Heart left ventricle (tissue), 16 donors: ENCODE measurements at regions of chr6 and their contacts with region 1.

Region 1: DNA sequence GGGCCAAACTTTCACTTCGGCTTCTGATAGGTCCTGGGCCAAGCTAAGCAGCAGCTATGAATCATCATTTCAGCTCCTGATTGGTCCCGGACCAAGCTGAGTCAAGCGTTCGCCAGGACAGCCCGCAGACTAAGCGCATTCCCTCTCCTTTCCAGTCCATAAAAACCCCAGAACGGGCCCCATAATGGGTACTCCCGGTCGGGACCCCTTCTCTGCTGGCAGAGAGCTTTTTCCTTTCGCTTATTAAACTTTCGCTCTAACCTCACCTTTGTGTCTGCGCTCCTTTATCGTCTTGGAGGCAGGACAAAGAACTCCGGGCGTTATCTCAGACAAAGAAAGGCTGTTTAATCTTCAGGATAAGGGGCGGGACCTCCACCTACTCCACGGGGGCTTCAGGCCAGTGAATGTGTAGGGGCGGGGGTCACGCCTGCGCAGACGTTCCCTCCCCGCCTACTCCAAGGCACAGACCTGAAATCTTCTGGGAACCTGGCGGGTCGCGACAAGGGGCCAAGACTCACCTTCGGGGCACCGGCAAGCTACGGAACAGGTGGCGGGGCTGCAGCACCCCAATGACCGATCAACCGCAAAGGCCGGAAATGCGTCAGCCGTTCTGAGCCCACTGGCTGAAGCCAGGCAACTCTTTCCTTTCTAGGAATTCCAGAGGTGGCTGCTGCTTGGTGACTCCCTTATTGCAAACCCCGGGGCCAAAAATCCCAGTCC is at the start of gene ZSCAN31:
- DNase-seq: peak; percentile 93 to 98 (median 96)
- ATAC-seq: peak; percentile 96 to 98 (median 97)
- H3K4me3 ChIP-seq: peak within 1 kb of the TSS; percentile 57 to 85 (median 74)
- H3K27ac ChIP-seq: peak within 1 kb of the TSS; percentile 90 to 100 (median 97)
- H3K4me1 ChIP-seq: peaks cover 0 to 24% (median 12%) of the 10 kb centered on the region in 12 donors
- H3K27me3 ChIP-seq: no peaks in the 10 kb centered on the region
- CTCF ChIP-seq: no peak
- POLR2A ChIP-seq: peak; percentile 49 to 83
- total RNA-seq, gene ZSCAN31: 7.5 to 22.0 (median 10.7) TPM

Region 2: DNA sequence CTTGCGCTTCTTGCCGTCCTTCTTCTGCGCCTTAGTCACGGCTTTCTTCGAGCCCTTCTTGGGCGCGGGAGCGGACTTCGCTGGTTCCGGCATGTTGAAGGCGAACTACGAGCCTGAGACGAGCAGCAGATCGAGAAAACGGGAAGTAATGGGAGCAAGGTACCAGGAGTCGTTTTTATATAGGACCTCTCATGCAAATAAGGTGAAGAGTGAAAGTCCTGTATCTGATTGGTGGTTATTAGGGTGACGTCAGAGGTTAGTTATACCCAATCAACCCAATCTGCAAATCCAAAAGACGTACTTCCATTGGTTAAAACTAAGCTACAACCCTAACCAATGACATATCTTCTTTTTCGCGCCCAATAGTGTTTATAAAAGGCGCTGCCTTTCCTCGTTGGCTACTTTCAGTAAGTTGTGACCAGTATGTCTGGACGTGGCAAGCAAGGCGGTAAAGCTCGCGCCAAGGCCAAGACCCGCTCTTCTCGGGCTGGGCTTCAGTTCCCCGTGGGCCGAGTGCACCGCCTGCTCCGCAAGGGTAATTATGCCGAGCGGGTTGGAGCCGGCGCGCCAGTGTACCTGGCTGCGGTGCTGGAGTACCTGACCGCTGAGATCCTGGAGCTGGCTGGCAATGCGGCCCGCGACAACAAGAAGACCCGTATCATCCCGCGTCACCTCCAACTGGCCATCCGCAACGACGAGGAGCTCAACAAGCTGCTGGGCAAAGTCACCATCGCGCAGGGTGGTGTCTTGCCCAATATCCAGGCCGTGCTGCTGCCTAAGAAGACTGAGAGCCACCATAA is 1188.8 kb before region 1 on chr6:
- intact Hi-C with region 1: loop called in 1 of 10 experiments (anchors 5 kb)
- DNase-seq: peak; percentile 73 to 84 (median 79)
- ATAC-seq: peak; percentile 95 to 98 (median 96)
- H3K4me3 ChIP-seq: peak overlapping the region; percentile 30 to 79 (median 65)
- H3K27ac ChIP-seq: peak overlapping the region; percentile 77 to 98 (median 90)
- H3K4me1 ChIP-seq: peaks cover 0 to 37% (median 11%) of the 10 kb centered on the region in 12 donors
- H3K27me3 ChIP-seq: no peaks in the 10 kb centered on the region
- CTCF ChIP-seq: no peak
- POLR2A ChIP-seq: peak; percentile 15 to 96

Region 3: DNA sequence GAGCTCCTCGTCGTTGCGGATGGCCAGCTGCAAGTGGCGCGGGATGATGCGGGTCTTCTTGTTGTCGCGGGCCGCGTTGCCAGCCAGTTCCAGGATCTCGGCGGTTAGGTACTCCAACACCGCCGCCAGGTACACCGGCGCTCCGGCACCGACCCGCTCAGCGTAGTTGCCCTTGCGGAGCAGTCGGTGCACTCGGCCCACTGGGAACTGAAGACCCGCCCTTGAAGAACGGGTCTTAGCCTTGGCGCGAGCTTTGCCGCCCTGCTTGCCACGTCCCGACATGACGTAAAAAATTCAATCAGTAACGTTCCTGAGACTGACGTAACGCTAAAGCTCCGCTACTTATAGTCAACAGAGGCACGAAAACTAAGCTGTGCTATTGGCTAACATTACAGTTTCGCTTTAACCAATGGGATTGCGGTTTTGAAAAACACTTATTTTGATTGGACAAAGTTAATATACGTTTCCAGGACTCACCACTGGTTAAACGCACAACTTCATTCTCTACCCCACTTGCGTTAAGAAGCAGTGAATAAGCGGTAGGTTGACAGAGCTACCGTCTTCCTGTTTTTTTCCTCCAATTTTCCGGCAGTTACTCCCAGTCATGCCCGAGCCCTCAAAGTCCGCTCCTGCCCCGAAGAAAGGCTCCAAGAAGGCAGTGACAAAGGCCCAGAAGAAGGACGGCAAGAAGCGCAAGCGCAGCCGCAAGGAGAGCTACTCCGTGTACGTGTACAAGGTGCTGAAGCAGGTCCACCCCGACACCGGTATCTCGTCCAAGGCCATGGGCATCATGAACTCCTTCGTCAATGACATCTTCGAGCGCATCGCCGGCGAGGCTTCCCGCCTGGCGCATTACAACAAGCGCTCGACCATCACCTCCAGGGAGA is 497.4 kb before region 1 on chr6:
- intact Hi-C with region 1: loop called in 1 of 10 experiments (anchors 10 kb)
- DNase-seq: peak; percentile 74 to 85 (median 76)
- ATAC-seq: peak; percentile 93 to 95 (median 95)
- H3K4me3 ChIP-seq: peak overlapping the region; percentile 62 to 87 (median 76)
- H3K27ac ChIP-seq: peak overlapping the region; percentile 88 to 98 (median 95)
- H3K4me1 ChIP-seq: peaks cover 0 to 33% (median 20%) of the 10 kb centered on the region in 12 donors
- H3K27me3 ChIP-seq: no peaks in the 10 kb centered on the region
- CTCF ChIP-seq: peak in 1 of 12 donors; percentile 11
- POLR2A ChIP-seq: peak; percentile 4 to 90

Region 4: DNA sequence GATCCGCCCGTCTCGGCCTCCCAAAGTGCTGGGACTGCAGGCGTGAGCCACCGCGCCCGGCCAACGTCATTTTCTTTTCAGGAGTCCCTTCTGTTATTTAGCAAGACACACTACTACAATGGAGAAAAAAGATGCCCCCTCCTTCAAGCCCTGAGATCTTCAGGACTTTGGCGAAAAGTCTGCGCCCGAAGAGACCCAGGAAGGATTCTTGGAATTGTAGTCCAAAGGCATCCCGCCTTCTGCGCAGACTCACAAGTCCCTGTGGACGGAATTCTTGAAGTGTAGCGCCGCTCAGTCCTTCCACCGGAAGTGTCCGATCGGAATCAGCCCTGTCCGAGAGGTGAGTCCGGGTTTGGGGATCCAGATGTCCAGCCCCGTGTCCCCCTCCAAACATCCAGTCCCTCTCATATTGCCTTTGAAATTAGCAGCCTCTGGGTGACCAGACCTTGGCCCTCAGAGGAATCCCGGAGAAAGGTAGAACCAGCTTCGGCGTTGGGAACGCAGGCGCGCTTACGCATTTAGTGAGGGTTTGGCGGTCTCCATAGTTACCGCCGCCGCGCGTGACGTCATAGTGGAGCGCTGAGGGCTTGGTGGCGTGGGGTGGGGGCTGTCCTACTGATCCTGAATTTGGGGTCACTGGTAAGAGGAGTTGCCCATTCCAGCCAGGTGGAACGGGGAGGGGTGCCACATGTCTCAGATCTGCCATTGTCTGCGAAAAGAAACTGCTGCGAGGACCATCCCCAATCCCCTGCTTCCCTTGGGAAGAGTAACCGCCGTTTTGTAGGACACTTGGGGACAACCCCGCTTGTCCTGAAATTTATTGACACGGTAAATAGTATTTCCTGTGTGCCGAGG is 254.9 kb before region 1 on chr6:
- intact Hi-C with region 1: loop called in 1 of 10 experiments (anchors 10 kb)
- DNase-seq: peak; percentile 94 to 97 (median 95)
- ATAC-seq: peak; percentile 97 to 99 (median 99)
- H3K4me3 ChIP-seq: peak overlapping the region; percentile 56 to 94 (median 77)
- H3K27ac ChIP-seq: peak overlapping the region; percentile 59 to 91 (median 86)
- H3K4me1 ChIP-seq: peaks cover 0 to 16% (median 6%) of the 10 kb centered on the region in 12 donors
- H3K27me3 ChIP-seq: no peaks in the 10 kb centered on the region
- CTCF ChIP-seq: peak in 1 of 12 donors; percentile 6
- POLR2A ChIP-seq: peak in 1 of 2 donors; percentile 48

Region 5: DNA sequence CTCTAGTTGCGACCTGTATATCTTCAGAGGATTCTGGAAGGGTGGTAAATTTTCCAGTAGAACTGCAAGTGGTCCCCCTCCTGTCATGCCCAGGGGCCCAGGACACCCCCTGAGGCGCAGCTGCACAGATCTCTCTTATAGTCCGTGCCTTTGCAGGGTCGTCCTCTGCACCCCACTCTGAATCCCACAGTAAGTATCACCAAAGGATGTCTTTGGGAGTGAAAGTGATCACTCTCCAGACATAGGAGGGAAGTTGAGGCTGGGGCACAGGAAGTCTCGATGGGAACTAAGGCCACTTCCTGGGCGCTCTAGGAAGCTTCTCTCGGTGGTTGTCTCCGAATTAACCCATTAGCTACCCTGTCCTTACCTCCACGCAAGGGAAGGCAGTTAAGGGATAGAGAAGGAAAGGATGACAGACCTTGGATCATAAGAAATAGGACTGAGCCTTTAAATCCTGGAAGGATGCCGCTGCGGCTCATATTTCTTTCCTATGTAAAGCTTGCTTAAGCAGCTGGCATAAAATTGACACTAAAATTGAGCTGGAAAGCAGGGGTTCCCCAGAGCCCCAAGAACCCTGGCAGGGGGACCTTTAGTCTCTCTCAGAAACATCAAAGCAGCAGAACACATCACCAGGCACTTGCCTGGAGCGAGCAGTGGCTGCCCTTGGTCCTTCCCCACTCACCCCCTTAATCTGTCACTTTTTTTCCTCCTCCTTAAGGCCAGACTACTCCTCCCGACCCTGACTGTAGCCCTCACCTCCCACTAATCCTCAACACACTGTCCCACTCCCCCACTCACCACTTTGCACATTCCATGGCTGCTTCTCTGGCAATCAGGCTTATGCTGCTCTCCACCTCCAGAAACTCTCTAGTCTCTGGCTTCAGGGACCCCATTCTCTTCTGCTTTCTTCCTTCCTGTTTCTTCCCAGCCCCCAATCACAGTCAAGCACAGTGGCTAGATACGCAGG is 83.4 kb before region 1 on chr6 and contains the start of gene ZKSCAN4:
- intact Hi-C with region 1: loop called in 1 of 10 experiments (anchors 10 kb)
- DNase-seq: peak; percentile 72 to 90 (median 84)
- ATAC-seq: peak; percentile 96 to 99 (median 98)
- H3K4me3 ChIP-seq: peak within 1 kb of the TSS; percentile 54 to 87 (median 78)
- H3K27ac ChIP-seq: peak within 1 kb of the TSS in 11 of 12 donors; percentile 9 to 83 (median 58)
- H3K4me1 ChIP-seq: peaks cover 6 to 32% (median 15%) of the 10 kb centered on the region in 12 donors
- H3K27me3 ChIP-seq: no peaks in the 10 kb centered on the region
- CTCF ChIP-seq: no peak
- POLR2A ChIP-seq: no peak
- total RNA-seq, gene ZKSCAN4: 2.1 to 5.0 (median 2.5) TPM

Region 6: DNA sequence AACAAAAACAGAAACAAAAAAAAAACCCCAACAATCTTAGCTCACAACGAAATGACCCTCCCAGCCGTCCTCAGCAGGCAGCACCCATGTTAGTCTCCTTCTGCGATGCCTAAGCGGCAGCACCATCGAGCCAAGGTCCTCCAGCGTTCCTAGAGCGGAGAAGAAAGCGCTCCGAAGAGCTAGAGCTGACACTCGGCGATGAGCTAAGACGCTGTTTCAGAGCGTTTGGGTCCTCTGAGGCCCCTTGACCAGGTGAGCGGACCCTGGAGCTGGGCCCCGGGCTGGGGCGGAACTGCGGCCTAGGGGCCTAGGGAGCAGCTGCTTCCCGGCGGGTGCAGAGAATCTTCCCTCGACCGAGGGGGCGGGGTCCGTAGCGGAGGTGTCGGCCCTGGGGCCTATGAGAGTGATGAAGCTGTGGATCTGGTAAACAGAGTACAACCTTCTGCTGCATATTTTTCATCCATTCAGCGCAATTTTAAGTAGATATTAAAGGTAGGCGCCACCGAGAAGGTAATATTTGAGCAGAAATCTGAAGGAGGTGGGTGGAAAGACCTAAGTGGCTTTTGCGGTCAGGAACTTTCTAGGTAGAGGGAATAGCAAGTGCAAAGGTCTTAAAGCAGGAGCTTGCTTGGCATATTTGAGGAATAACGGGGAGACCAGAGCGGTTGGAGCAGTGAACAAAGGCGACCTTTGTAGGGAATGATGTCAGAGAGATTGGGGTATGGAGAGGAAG is 68.6 kb before region 1 on chr6 and contains the start of gene ZSCAN26:
- intact Hi-C with region 1: loop called in 4 of 10 experiments (anchors 5 kb)
- DNase-seq: peak; percentile 79 to 88 (median 87)
- ATAC-seq: peak; percentile 92 to 99 (median 98)
- H3K4me3 ChIP-seq: peak within 1 kb of the TSS; percentile 29 to 88 (median 76)
- H3K27ac ChIP-seq: peak within 1 kb of the TSS; percentile 45 to 93 (median 87)
- H3K4me1 ChIP-seq: peaks cover 0 to 35% (median 12%) of the 10 kb centered on the region in 12 donors
- H3K27me3 ChIP-seq: no peaks in the 10 kb centered on the region
- CTCF ChIP-seq: peak in 1 of 12 donors; percentile 14
- POLR2A ChIP-seq: peak in 1 of 2 donors; percentile 53
- total RNA-seq, gene ZSCAN26: 9.8 to 16.4 (median 12.2) TPM

Region 7: GRCh38 chr6:28281288-28282064 is 54.2 kb before region 1 on chr6 and contains the start of gene PGBD1:
- intact Hi-C with region 1: loop called in 4 of 10 experiments (anchors 5 to 10 kb)
- DNase-seq: peak; percentile 73 to 90 (median 88)
- ATAC-seq: peak; percentile 68 to 99 (median 96)
- H3K4me3 ChIP-seq: peak within 1 kb of the TSS; percentile 59 to 88 (median 74)
- H3K27ac ChIP-seq: peak within 1 kb of the TSS in 9 of 12 donors; percentile 29 to 76 (median 57)
- H3K4me1 ChIP-seq: peaks cover 0 to 18% (median 7%) of the 10 kb centered on the region in 12 donors
- H3K27me3 ChIP-seq: no peaks in the 10 kb centered on the region
- CTCF ChIP-seq: no peak
- POLR2A ChIP-seq: peak in 1 of 2 donors; percentile 47
- total RNA-seq, gene PGBD1: 2.5 to 3.8 (median 2.9) TPM

Region 8: DNA sequence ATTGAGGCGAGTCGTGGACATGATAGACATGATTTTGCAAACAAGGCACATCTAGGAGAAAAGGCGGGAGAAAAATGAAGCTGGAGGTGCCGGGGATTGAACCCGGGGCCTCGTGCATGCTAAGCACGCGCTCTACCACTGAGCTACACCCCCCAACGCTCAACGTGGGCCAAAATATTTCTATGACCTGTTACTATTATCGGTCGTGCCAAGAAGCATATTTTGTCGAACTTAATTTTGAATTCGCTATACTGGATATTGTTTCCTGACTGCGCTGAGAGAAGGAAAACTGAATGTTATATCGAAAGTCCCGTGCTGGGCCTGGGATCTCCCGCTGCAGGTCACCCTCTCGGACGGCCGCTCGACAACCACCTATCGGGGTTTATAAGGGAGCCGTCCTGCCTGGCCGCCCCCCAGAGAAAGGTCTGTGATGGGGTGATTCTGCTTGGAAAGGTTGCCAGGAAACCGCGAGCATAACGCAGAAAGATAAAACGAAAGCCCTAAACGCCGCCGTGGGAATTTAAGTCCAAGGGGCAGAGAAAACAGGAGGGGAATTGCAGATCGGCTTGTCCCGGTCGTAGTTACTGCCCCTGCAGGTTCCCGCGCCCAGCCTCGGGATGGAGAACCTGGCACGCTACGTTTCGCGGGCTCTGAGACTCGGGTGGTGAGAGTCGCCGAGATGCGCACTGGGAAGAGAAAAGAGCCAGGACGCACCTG is 528.0 kb after region 1 on chr6:
- intact Hi-C with region 1: no loop called
- DNase-seq: peak; percentile 55 to 78 (median 59)
- ATAC-seq: peak; percentile 79 to 90 (median 88)
- H3K4me3 ChIP-seq: peak overlapping the region; percentile 42 to 93 (median 78)
- H3K27ac ChIP-seq: peak overlapping the region in 7 of 12 donors; percentile 0 to 77 (median 41)
- H3K4me1 ChIP-seq: peaks cover 0 to 19% (median 7%) of the 10 kb centered on the region in 12 donors
- H3K27me3 ChIP-seq: peaks cover 0 to 10% (median 0%) of the 10 kb centered on the region in 9 donors
- CTCF ChIP-seq: no peak
- POLR2A ChIP-seq: no peak